Naive thymus-derived CD4-positive, alpha-beta T cell (primary cell): ENCODE measurements at regions of chr16 and their contacts with region 1.

Region 1: GRCh38 chr16:72442385-72443158 is 270.6 kb upstream of the PMFBP1 start:
- DNase-seq: no peak
- ATAC-seq: no peak
- H3K4me3 ChIP-seq: no peak overlapping the region
- H3K4me3 Mint-ChIP-seq: no peak overlapping the region
- H3K27ac ChIP-seq: no peak overlapping the region
- H3K27ac Mint-ChIP-seq: no peak overlapping the region
- H3K4me1 ChIP-seq: no peaks in the 10 kb centered on the region
- H3K4me1 Mint-ChIP-seq: no peaks in the 10 kb centered on the region
- H3K27me3 ChIP-seq: no peaks in the 10 kb centered on the region
- H3K27me3 Mint-ChIP-seq: no peaks in the 10 kb centered on the region

Region 2: GRCh38 chr16:72264771-72265170 is 177.8 kb before region 1 on chr16:
- CTCF ChIA-PET with region 1: no interaction called
- POLR2A ChIA-PET with region 1: no interaction called
- intact Hi-C with region 1: no loop called
- DNase-seq: no peak
- ATAC-seq: no peak
- H3K4me3 ChIP-seq: no peak overlapping the region
- H3K4me3 Mint-ChIP-seq: no peak overlapping the region
- H3K27ac ChIP-seq: no peak overlapping the region
- H3K27ac Mint-ChIP-seq: no peak overlapping the region
- H3K4me1 ChIP-seq: no peaks in the 10 kb centered on the region
- H3K4me1 Mint-ChIP-seq: no peaks in the 10 kb centered on the region
- H3K27me3 ChIP-seq: no peaks in the 10 kb centered on the region
- H3K27me3 Mint-ChIP-seq: peaks cover 0 to 6% (median 3%) of the 10 kb centered on the region in 5 donors

Region 3: GRCh38 chr16:72425571-72426341 is 16.8 kb before region 1 on chr16:
- CTCF ChIA-PET with region 1: no interaction called
- POLR2A ChIA-PET with region 1: no interaction called
- intact Hi-C with region 1: no loop called
- DNase-seq: no peak
- ATAC-seq: no peak
- H3K4me3 ChIP-seq: no peak overlapping the region
- H3K4me3 Mint-ChIP-seq: no peak overlapping the region
- H3K27ac ChIP-seq: no peak overlapping the region
- H3K27ac Mint-ChIP-seq: no peak overlapping the region
- H3K4me1 ChIP-seq: no peaks in the 10 kb centered on the region
- H3K4me1 Mint-ChIP-seq: no peaks in the 10 kb centered on the region
- H3K27me3 ChIP-seq: no peaks in the 10 kb centered on the region
- H3K27me3 Mint-ChIP-seq: no peaks in the 10 kb centered on the region

Region 4: GRCh38 chr16:72467157-72467759 is 24.7 kb after region 1 on chr16:
- CTCF ChIA-PET with region 1: no interaction called
- POLR2A ChIA-PET with region 1: no interaction called
- intact Hi-C with region 1: loop called in 1 of 2 experiments (anchors 2 kb)
- DNase-seq: no peak
- ATAC-seq: peak; percentile 37
- H3K4me3 ChIP-seq: no peak overlapping the region
- H3K4me3 Mint-ChIP-seq: no peak overlapping the region
- H3K27ac ChIP-seq: no peak overlapping the region
- H3K27ac Mint-ChIP-seq: no peak overlapping the region
- H3K4me1 ChIP-seq: no peaks in the 10 kb centered on the region
- H3K4me1 Mint-ChIP-seq: peaks cover 0 to 5% (median 0%) of the 10 kb centered on the region in 7 donors
- H3K27me3 ChIP-seq: no peaks in the 10 kb centered on the region
- H3K27me3 Mint-ChIP-seq: peaks cover 0 to 6% (median 0%) of the 10 kb centered on the region in 5 donors